ENCODE measurements at regions of chr4 and their contacts with region 1.

Region 1: GRCh38 chr4:149961876-149962597 is 116.2 kb upstream of the DCLK2 start:
- DNase-seq: peak; percentile 83
- ATAC-seq: peak; percentile 87
- H3K4me3 ChIP-seq: no peak overlapping the region
- H3K27ac ChIP-seq: no peak overlapping the region
- H3K4me1 ChIP-seq: peaks cover 4% of the 10 kb centered on the region; the same call in 1 of the 2 replicates
- H3K27me3 ChIP-seq: no peaks in the 10 kb centered on the region
- CTCF ChIP-seq: no peak
- POLR2A ChIP-seq: no peak
- RAD21 ChIP-seq: no peak

Region 2: DNA sequence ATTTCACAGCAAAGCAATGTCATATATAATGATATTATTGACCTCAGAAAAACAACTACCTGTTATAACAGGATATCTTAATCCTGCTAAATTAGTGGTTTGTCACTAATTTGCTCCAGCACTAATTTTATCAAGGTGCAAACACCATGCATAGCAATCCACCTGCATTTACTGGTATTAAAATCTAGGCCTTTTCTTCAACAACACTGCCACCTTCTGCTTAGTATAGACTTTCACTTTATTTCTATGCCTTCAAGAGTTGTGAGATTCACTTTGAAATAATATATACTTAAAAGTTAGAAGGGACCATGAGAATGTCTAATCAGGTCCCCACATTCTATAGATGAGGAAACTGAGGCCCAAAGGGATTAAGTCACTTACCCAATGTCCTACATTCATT is 64.3 kb before region 1 on chr4:
- CTCF ChIA-PET with region 1: no interaction called
- POLR2A ChIA-PET with region 1: no interaction called
- dilution Hi-C with region 1: no loop called
- in situ Hi-C with region 1: no loop called
- intact Hi-C with region 1: no loop called
- DNase-seq: peak; percentile 26
- ATAC-seq: peak; percentile 77
- H3K4me3 ChIP-seq: no peak overlapping the region
- H3K27ac ChIP-seq: no peak overlapping the region
- H3K4me1 ChIP-seq: no peaks in the 10 kb centered on the region
- H3K27me3 ChIP-seq: no peaks in the 10 kb centered on the region
- CTCF ChIP-seq: peak; percentile 59
- POLR2A ChIP-seq: no peak
- RAD21 ChIP-seq: peak; percentile 73

Region 3: GRCh38 chr4:150181536-150181935 is 219.5 kb after region 1 on chr4:
- CTCF ChIA-PET with region 1: interaction called, 10 read pairs
- POLR2A ChIA-PET with region 1: no interaction called
- dilution Hi-C with region 1: no loop called
- in situ Hi-C with region 1: no loop called
- intact Hi-C with region 1: no loop called
- DNase-seq: peak; percentile 62
- ATAC-seq: no peak
- H3K4me3 ChIP-seq: no peak overlapping the region
- H3K27ac ChIP-seq: no peak overlapping the region
- H3K4me1 ChIP-seq: peaks cover 3% of the 10 kb centered on the region
- H3K27me3 ChIP-seq: no peaks in the 10 kb centered on the region
- CTCF ChIP-seq: no peak
- POLR2A ChIP-seq: no peak
- RAD21 ChIP-seq: no peak